BJ (cell line): ENCODE measurements at regions of chr2 and their contacts with region 1.

Region 1: DNA sequence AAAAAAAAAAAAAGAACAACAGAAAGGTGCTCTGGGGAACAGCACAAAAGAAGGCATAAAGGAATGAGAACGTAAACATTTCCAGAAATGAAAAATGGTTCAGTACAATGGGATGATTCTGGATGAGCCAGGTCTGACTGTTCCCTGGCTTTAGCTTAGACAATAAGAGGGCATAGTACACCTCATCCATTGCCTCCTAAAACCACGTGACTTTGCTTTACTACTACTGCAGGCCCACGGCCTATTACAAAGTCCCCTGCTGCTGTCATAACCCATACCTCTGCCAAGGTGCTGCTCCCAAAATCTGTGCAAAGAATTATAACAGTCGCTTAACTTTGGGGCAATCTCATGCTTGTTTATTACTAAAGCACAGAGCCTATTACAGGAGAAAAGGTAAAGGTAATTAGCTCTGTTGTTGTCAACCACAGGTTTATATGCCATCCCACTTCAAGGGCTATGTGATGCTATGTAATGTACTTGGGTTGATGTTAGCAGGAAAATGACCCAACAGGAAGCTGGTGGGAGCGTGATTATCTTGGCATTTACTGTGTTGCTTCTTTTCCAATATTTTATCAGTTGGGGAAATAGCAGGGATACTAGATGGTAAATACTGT is 26.8 kb downstream of the STK17B start:
- DNase-seq: no peak
- H3K4me3 ChIP-seq: no peak overlapping the region
- H3K27me3 ChIP-seq: no peaks in the 10 kb centered on the region
- CTCF ChIP-seq: no peak

Region 2: GRCh38 chr2:196403471-196403870 is 258.9 kb after region 1 on chr2:
- CTCF ChIA-PET with region 1: no interaction called
- POLR2A ChIA-PET with region 1: interaction called, 10 read pairs
- DNase-seq: peak; percentile 49
- H3K4me3 ChIP-seq: no peak overlapping the region
- H3K27me3 ChIP-seq: no peaks in the 10 kb centered on the region
- CTCF ChIP-seq: no peak